ENCODE measurements at regions of chr1 and their contacts with region 1.

Region 1: DNA sequence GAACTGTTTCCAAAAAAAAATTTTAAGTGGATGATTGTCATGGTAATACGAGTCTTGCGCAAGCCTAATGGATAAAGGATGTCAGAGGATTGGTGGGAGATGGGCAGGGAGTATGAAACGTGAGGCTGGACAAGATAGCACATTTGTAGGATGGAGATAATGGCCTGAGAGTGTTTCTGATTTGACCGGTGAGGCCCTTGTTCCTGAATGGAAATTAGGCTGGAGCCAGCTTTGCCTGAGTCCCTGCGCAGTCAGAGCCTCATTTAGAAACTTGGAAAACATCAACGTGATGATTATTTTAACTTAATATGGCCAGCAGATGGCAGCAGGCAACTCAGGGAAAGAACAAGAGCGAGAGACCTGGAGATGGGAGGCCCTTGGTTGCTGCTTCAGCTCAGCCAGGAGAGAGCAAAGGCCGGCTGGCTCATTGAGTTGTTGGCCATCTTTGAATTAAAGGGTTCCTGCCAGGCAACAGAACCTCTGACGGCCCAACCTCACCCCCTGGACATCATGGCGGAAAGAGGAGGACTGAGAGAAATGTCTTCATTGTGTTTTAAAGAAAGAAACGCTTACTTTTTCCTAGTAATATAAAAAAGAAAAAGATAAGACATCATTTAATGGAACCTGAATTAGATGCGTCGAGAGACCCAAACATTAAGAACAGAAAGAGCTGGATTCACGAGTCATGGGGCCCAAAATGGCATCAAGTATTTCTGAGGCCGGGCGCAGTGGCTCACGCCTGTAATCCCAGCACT is 80.3 kb downstream of the SELENOF start:
- DNase-seq: peak; percentile 90

Region 2: DNA sequence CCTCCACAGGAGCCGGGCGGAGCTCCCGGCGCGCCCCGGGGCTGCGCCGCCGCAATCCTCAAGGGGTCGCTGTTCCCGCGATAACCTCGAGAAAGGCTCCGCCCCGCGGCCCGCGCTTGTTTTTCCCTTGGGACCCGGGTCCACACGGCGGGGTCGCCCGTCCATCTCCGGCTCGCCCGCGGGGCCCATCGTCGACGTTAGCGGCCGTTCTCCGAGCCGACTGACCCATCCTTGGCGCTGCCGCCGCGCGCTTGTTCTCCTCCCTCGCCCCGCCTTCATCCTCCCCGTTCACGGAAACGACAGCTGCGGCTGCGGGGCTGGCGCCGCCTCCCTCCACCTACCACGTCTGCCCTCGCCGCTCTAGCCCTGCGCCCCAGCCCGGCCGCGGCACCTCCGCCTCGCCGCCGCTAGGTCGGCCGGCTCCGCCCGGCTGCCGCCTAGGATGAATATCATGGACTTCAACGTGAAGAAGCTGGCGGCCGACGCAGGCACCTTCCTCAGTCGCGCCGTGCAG is 129.1 kb before region 1 on chr1 and contains the start of gene SH3GLB1:
- intact Hi-C with region 1: no loop called
- DNase-seq: peak; percentile 97
- total RNA-seq, gene SH3GLB1: 105 to 129 TPM

Region 3: DNA sequence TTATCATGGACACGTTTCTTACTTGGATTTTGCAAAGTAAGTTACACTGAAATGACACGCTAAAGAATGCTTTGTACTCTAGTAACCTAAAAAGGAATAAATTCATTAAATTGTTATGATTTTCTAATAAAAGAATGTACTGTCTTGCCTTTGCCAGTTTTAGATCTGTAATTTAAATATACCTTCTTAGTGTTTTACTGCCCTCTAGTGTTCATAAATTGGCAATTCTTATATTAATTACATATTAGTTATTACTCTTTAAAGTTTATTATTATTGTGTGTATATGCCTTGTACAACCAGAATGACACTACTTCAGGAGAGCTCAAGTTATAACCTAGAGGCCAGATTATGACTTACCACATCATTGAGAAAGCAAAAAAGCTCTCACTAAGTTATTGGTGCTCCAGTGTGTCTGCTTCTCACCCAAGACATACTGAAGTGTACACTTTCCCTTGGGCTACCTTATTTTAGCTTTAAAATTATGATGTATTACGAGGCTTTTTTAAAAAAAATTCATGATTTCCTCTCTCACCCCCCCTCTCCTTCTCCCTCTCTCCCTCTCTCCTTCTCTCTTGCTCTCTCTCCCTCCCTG is 250.7 kb after region 1 on chr1:
- intact Hi-C with region 1: loop called in 1 of 2 experiments (anchors 10 kb)
- DNase-seq: no peak

Region 4: GRCh38 chr1:87951852-87952251 is 1118.2 kb after region 1 on chr1:
- intact Hi-C with region 1: no loop called
- DNase-seq: no peak